Caco-2 (cell line): ENCODE measurements at regions of chr4 and their contacts with region 1.

Region 1: GRCh38 chr4:169485791-169486742 is 126.3 kb downstream of the NEK1 start:
- DNase-seq: peak in 1 of 2 experiments; percentile 53
- H3K4me3 ChIP-seq: no peak overlapping the region
- H3K4me3 Mint-ChIP-seq: no peak overlapping the region
- H3K27ac Mint-ChIP-seq: no peak overlapping the region
- H3K4me1 ChIP-seq: 0 out of 2 replicates have a peak, but pooled peaks cover 4% of the 10 kb centered on the region
- H3K4me1 Mint-ChIP-seq: no peaks in the 10 kb centered on the region
- H3K27me3 ChIP-seq: no peaks in the 10 kb centered on the region
- H3K27me3 Mint-ChIP-seq: no peaks in the 10 kb centered on the region
- CTCF ChIP-seq: peak; percentile 34 to 42

Region 2: GRCh38 chr4:168183717-168184608 is 1302.1 kb before region 1 on chr4:
- CTCF ChIA-PET with region 1: no interaction called
- POLR2A ChIA-PET with region 1: no interaction called
- intact Hi-C with region 1: loop called (anchors 10 kb)
- DNase-seq: no peak
- H3K4me3 ChIP-seq: no peak overlapping the region
- H3K4me3 Mint-ChIP-seq: no peak overlapping the region
- H3K27ac Mint-ChIP-seq: no peak overlapping the region
- H3K4me1 ChIP-seq: no peaks in the 10 kb centered on the region
- H3K4me1 Mint-ChIP-seq: no peaks in the 10 kb centered on the region
- H3K27me3 ChIP-seq: no peaks in the 10 kb centered on the region
- H3K27me3 Mint-ChIP-seq: peaks cover 4% of the 10 kb centered on the region
- CTCF ChIP-seq: peak; percentile 34 to 44

Region 3: GRCh38 chr4:168710353-168710946 is 775.6 kb before region 1 on chr4:
- CTCF ChIA-PET with region 1: no interaction called
- POLR2A ChIA-PET with region 1: no interaction called
- intact Hi-C with region 1: loop called (anchors 2 kb)
- DNase-seq: peak; percentile 30 to 36
- H3K4me3 ChIP-seq: no peak overlapping the region
- H3K4me3 Mint-ChIP-seq: no peak overlapping the region
- H3K27ac Mint-ChIP-seq: no peak overlapping the region
- H3K4me1 ChIP-seq: no peaks in the 10 kb centered on the region
- H3K4me1 Mint-ChIP-seq: no peaks in the 10 kb centered on the region
- H3K27me3 ChIP-seq: no peaks in the 10 kb centered on the region; the same call in 1 of the 2 replicates
- H3K27me3 Mint-ChIP-seq: peaks cover 3% of the 10 kb centered on the region
- CTCF ChIP-seq: peak; percentile 36 to 58

Region 4: GRCh38 chr4:169024762-169025161 is 461.3 kb before region 1 on chr4:
- CTCF ChIA-PET with region 1: no interaction called
- POLR2A ChIA-PET with region 1: no interaction called
- intact Hi-C with region 1: loop called (anchors 1 kb)
- DNase-seq: peak in 1 of 2 experiments; percentile 43
- H3K4me3 ChIP-seq: no peak overlapping the region
- H3K4me3 Mint-ChIP-seq: no peak overlapping the region
- H3K27ac Mint-ChIP-seq: no peak overlapping the region
- H3K4me1 ChIP-seq: no peaks in the 10 kb centered on the region
- H3K4me1 Mint-ChIP-seq: no peaks in the 10 kb centered on the region
- H3K27me3 ChIP-seq: no peaks in the 10 kb centered on the region
- H3K27me3 Mint-ChIP-seq: no peaks in the 10 kb centered on the region
- CTCF ChIP-seq: peak; percentile 32 to 54

Region 5: GRCh38 chr4:169270810-169271691 is 215.0 kb before region 1 on chr4 and contains the start of gene SH3RF1:
- CTCF ChIA-PET with region 1: no interaction called
- POLR2A ChIA-PET with region 1: no interaction called
- intact Hi-C with region 1: loop called (anchors 1 kb)
- DNase-seq: peak; percentile 88 to 89
- H3K4me3 ChIP-seq: peak within 1 kb of the TSS; percentile 71
- H3K4me3 Mint-ChIP-seq: peak within 1 kb of the TSS; percentile 96
- H3K27ac Mint-ChIP-seq: peak within 1 kb of the TSS; percentile 95
- H3K4me1 ChIP-seq: peaks cover 43% of the 10 kb centered on the region
- H3K4me1 Mint-ChIP-seq: peaks cover 38% of the 10 kb centered on the region
- H3K27me3 ChIP-seq: no peaks in the 10 kb centered on the region
- H3K27me3 Mint-ChIP-seq: no peaks in the 10 kb centered on the region
- CTCF ChIP-seq: peak; percentile 20 to 35
- total RNA-seq, gene SH3RF1: 25.1 and 28.1 TPM in 2 replicates

Region 6: GRCh38 chr4:170259631-170260153 is 773.6 kb after region 1 on chr4:
- CTCF ChIA-PET with region 1: no interaction called
- POLR2A ChIA-PET with region 1: no interaction called
- intact Hi-C with region 1: no loop called
- DNase-seq: peak; percentile 82 to 86
- H3K4me3 ChIP-seq: no peak overlapping the region
- H3K4me3 Mint-ChIP-seq: no peak overlapping the region
- H3K27ac Mint-ChIP-seq: no peak overlapping the region
- H3K4me1 ChIP-seq: no peaks in the 10 kb centered on the region
- H3K4me1 Mint-ChIP-seq: no peaks in the 10 kb centered on the region
- H3K27me3 ChIP-seq: no peaks in the 10 kb centered on the region
- H3K27me3 Mint-ChIP-seq: no peaks in the 10 kb centered on the region
- CTCF ChIP-seq: peak; percentile 79 to 86